ENCODE measurements at regions of chr22 and their contacts with region 1.

Region 1: GRCh38 chr22:50030297-50031188 is 18.0 kb upstream of the IL17REL start:
- DNase-seq: no peak
- H3K4me3 ChIP-seq: no peak overlapping the region
- H3K27ac ChIP-seq: no peak overlapping the region
- H3K4me1 ChIP-seq: peaks cover 15% of the 10 kb centered on the region
- H3K27me3 ChIP-seq: no peaks in the 10 kb centered on the region
- CTCF ChIP-seq: peak; percentile 75 to 89 (median 84)
- POLR2A ChIP-seq: no peak

Region 2: GRCh38 chr22:49676783-49677494 is 353.6 kb before region 1 on chr22:
- intact Hi-C with region 1: no loop called
- DNase-seq: peak in 1 of 2 donors; percentile 96
- H3K4me3 ChIP-seq: no peak overlapping the region
- H3K27ac ChIP-seq: no peak overlapping the region
- H3K4me1 ChIP-seq: no peaks in the 10 kb centered on the region
- H3K27me3 ChIP-seq: no peaks in the 10 kb centered on the region
- CTCF ChIP-seq: no peak
- POLR2A ChIP-seq: no peak

Region 3: GRCh38 chr22:49767355-49768062 is 263.0 kb before region 1 on chr22:
- intact Hi-C with region 1: no loop called
- DNase-seq: no peak
- H3K4me3 ChIP-seq: no peak overlapping the region
- H3K27ac ChIP-seq: no peak overlapping the region
- H3K4me1 ChIP-seq: no peaks in the 10 kb centered on the region
- H3K27me3 ChIP-seq: no peaks in the 10 kb centered on the region
- CTCF ChIP-seq: peak; percentile 13 to 30 (median 21)
- POLR2A ChIP-seq: no peak

Region 4: DNA sequence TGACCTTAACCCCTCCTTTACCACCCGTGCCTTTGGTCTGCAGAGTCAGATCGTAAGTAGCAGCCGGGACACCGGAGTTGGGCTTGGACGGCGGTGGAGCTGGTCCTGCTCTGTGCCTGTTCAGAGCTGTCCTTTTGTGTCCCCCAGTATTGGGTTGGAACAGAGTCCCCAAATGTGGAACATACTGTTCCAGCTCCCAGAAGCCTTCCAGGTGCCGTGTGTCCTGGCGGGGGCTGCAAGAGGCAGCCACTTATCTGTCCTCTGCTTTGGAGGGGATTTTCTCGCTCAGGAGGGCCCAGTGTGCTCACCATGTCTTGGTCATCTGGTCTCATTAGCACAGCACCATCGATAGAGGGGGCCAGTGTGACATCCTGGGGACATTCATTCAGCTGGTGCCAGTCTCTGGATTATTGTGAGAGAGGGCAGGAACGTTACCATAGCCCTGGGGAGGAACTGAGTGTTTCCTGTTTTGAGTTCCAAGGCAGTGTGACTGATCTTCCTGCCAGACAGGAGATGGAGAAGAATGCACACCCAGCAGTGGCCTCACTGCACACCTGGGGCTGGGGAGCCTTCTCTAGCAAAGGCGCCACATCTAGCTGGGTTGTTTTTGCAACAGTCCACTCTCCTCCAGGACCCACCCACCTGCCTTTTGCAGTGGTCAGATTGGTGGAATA is 99.7 kb before region 1 on chr22:
- intact Hi-C with region 1: loop called (anchors 2 kb)
- DNase-seq: no peak
- H3K4me3 ChIP-seq: no peak overlapping the region
- H3K27ac ChIP-seq: no peak overlapping the region
- H3K4me1 ChIP-seq: peaks cover 54% of the 10 kb centered on the region
- H3K27me3 ChIP-seq: no peaks in the 10 kb centered on the region
- CTCF ChIP-seq: peak in 1 of 3 experiments; percentile 22
- POLR2A ChIP-seq: no peak

Region 5: DNA sequence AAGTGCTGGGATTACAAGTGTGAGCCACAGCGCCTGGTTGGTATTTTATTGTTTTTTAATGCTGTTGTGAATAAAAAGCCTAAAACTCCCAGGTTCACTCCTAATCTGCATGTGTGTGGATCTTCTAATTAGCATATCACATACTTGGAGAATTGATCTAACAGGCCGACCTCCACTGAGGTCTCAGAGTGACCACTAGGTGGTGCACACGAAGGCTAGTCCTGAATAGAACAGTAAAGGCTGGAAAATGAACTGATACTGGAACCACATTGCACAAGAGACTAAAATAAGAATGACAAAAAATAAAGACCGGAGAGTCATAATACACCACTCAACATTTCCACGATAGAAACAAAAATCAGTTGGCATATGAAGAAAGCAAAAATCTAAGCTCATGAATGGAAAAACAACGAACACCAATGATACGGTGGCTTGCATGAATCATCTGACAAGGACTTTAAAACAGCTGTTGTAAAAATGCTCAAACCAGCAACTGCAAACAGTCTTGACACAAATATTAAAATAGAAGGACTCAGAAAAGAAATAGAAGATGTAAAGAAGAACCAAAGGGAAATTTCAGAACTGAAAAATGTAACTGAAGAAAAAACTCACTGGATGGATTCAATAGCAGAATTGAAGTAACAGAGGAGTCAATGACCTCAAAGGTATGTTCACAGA is 50.8 kb before region 1 on chr22:
- intact Hi-C with region 1: no loop called
- DNase-seq: no peak
- H3K4me3 ChIP-seq: no peak overlapping the region
- H3K27ac ChIP-seq: no peak overlapping the region
- H3K4me1 ChIP-seq: peaks cover 23% of the 10 kb centered on the region
- H3K27me3 ChIP-seq: no peaks in the 10 kb centered on the region
- CTCF ChIP-seq: peak in 1 of 3 experiments; percentile 27
- POLR2A ChIP-seq: no peak

Measured in vagina (tissue), 2 donors.